Uterus (tissue), 4 donors: ENCODE measurements at regions of chr6 and their contacts with region 1.

Region 1: DNA sequence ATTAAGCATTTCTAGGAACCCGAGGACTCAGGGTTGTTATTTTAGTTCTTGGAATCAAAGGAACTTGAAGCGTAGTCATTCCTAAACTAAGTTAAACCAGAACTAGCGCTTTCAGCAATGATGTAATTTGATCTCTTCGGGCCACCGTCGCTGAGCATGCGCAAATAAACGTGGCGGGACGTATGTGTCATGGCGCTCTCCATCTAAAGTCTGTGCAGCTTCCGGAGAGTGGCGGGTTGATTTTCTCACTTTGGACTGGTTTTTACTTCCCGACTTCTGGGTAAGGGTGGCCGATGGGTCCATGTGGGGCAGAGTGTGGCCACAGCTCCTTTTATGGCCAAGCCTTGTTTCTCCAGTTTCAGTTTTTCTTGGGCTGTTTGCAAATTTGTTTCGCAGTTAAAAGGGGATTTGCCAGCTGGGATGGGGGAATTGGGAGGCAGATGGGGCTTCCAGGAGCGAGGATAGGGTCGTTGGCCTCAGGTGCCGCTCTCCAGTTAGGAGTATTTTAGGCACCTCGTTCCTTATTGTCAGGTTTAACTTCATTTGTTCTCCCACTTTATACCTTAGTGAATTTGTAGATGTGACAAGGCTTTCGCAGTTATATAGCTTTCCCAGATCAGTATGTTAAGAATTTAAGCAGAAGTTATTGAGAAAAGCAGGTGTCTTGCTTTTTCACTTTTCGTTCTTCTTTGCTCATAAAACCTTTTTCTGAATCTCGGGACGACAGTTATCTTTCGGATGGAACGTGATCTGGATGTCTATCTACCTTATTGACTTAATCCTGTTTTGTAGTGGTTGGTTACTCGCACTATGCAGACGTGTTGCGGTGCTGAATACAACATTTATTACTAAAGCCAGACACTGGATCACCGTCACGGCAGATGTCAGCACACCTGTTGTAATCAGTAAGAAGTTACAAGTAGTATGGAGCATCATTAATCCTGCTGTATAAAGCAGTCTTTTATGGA is at the start of gene CDKAL1:
- DNase-seq: peak; percentile 90 to 92
- H3K4me3 ChIP-seq: peak within 1 kb of the TSS; percentile 49 to 74
- H3K27ac ChIP-seq: peak within 1 kb of the TSS; percentile 80 to 85
- H3K4me1 ChIP-seq: no peaks in the 10 kb centered on the region
- H3K27me3 ChIP-seq: no peaks in the 10 kb centered on the region
- CTCF ChIP-seq: peak in 2 of 4 experiments; percentile 11 to 20
- POLR2A ChIP-seq: peak in 1 of 2 donors; percentile 42
- total RNA-seq, gene CDKAL1: 5.0 to 51.7 (median 18.9) TPM

Region 2: GRCh38 chr6:20291764-20292580 is 242.6 kb before region 1 on chr6:
- intact Hi-C with region 1: loop called (anchors 5 kb)
- DNase-seq: peak; percentile 72 to 79
- H3K4me3 ChIP-seq: no peak overlapping the region
- H3K27ac ChIP-seq: no peak overlapping the region
- H3K4me1 ChIP-seq: no peaks in the 10 kb centered on the region
- H3K27me3 ChIP-seq: no peaks in the 10 kb centered on the region
- CTCF ChIP-seq: peak; percentile 82 to 93 (median 86)
- POLR2A ChIP-seq: no peak

Region 3: DNA sequence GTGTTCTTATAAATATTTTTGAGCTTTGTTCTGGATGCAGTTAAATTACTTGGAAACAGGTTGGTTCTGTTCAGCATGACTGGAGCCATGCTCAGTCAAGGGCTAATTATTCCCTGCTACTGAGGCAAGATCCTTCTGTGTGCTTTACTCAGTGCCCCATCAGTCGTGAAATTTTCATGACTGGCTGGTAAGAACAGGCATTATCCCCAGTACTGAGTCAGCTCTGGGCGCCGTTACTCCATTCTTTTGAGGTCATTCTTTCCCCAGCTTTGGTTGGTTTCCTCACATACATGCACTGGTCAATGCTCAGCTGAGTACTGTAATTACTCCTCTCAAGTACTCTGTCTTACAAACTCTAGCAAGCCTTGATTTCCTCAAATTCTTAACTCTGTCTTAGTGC is 71.0 kb after region 1 on chr6:
- intact Hi-C with region 1: no loop called
- DNase-seq: no peak
- H3K4me3 ChIP-seq: no peak overlapping the region
- H3K27ac ChIP-seq: no peak overlapping the region
- H3K4me1 ChIP-seq: no peaks in the 10 kb centered on the region
- H3K27me3 ChIP-seq: no peaks in the 10 kb centered on the region
- CTCF ChIP-seq: no peak
- POLR2A ChIP-seq: no peak